Lower leg skin (tissue), 4 donors: ENCODE measurements at regions of chr6 and their contacts with region 1.

Region 1: DNA sequence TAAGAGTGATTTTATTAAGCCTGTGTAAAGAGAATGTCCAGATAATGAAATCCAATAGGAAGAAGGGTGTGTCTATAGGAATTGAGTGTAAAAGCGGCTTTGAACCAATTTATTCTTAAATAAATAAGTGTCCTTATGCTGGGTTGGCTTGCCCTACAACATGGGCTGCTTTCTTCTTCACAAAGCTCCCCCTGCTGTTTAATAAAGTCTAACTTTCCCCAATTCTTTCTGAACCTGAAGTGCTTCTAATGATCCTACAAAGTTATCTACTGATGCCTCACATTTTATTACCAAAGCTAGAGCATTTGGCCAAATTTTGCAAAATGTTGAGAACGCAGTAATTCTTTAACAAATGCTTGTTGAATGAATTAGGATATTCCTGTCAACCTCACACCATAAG is 36.3 kb upstream of the SIRT5 start:
- DNase-seq: no peak
- H3K4me3 ChIP-seq: no peak overlapping the region
- CTCF ChIP-seq: no peak
- POLR2A ChIP-seq: no peak

Region 2: DNA sequence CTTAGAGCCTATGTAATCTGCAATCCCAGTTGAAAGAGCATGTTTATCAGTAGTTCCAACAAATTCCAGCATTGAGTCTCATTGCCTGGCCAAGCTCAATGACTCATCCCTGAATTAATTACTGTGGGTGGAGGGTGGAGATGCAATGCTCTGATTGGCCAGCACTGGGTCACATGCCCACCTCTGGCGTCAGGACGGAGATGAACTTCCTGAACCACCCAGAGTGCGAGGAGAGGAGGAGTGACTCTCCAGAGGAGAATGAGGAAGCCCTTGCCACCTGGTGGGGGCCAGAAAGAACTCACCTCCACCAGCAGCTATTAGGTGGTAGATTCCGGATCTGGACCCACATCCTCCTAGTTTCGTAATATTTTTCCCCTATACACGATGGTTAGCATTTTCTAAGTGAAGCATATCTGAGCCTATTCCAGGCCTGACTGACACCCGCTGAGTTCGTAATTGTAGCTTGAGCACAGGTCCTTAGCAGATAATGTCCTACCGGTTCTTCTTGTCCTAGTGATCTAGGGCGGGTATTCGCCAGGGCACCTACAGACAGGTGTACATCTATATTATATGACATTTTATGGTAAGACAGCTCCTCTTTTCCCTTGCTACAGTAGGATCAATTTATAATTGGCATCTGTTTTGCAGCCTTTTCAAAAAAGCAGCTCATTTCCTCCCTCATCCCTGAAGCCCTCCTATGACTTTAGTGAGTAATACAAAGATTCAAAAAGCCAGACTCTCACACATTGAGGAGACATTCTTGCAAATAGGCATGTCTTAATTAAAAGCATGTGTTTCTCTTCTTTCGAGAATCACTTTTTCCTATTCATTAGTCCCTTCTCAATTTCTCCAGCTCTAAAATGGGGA is 493.5 kb before region 1 on chr6:
- intact Hi-C with region 1: no loop called
- DNase-seq: peak; percentile 72 to 94
- H3K4me3 ChIP-seq: no peak overlapping the region
- CTCF ChIP-seq: no peak
- POLR2A ChIP-seq: no peak

Region 3: DNA sequence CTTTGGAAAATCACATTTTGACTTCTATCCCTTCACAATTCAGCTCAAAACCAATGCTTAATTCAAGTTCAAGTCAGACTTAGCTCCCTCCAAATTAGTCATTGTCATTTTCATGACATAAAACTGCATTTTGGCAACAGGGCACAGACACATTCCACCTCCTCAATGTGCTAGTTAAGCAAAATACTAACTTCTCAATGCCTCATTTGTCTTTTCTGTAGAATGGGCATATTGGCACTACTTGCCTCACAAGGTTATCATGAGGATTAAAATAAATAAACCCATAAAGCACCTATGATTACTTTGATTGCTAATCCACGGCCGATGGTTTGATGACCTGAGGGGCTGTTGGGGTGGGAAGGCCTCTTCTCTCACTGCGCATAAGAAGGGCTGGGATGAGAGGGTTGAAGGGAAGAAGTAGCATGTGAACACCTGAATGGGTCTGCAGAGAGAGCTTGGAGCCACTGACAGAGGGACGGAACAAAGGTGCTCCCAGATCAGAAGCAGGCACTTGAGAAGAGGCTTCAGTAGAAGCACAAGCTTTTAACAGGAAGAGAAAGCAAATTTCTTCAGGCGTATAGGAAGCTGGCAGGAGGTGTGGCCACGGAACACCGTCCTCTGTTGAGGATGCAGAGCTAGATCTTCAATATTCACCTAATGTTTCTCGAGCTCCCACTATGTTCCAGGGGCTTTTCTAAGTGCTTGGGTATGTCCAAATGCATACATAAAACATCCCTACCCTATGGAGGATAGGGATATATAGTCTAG is 198.0 kb before region 1 on chr6:
- intact Hi-C with region 1: loop called (anchors 10 kb)
- DNase-seq: no peak
- H3K4me3 ChIP-seq: no peak overlapping the region
- CTCF ChIP-seq: no peak
- POLR2A ChIP-seq: no peak

Region 4: GRCh38 chr6:14001329-14002012 is 463.4 kb after region 1 on chr6:
- intact Hi-C with region 1: no loop called
- DNase-seq: no peak
- H3K4me3 ChIP-seq: no peak overlapping the region
- CTCF ChIP-seq: no peak
- POLR2A ChIP-seq: no peak